Activated CD4-positive, alpha-beta T cell treated with anti-CD3 and anti-CD28 coated beads for 36 hours (primary cell): ENCODE measurements at regions of chr1 and their contacts with region 1.

Region 1: DNA sequence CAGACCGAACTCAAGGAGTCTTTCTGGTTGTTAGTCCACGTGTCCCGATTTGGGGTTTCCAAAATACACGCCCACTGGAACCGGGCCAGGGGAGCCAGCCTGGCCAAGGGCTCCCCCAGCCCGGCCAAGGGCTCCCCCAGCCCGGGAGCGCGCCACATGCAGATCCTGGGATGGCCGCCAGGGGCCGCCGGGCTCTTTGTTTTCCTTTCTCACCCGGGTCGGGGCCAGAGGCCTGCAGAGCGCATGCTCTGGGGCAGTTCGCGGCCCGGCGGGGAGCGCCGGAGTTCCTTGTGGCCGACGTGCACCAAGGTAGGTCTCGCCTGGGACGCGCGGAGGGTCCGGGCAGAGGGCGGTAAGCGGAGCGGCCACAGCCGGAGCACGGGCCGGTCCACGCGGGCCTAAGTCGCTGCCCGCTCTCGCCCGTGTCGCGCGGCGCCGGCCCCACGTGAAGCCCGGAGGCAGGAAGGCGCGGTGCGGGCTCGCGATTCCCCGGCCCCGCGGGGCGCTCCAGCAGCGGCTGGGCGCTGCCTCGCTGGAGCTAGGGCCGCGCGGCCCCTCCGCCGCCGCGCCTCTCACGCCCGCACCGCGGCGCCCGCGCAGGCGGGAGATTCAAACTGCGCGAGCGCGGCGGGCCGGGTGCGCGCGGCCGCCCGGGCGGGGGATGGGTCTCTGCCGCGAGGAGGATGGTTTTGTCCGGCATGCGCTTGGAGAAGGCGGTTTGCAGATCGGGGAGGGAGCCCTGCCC is 12.3 kb downstream of the RCC1 start:
- DNase-seq: peak; percentile 95
- ATAC-seq: peak; percentile 66
- H3K4me3 Mint-ChIP-seq: peak overlapping the region; percentile 77
- H3K27ac Mint-ChIP-seq: peak overlapping the region; percentile 83
- H3K4me1 Mint-ChIP-seq: peaks cover 34% of the 10 kb centered on the region
- H3K27me3 Mint-ChIP-seq: no peaks in the 10 kb centered on the region

Region 2: DNA sequence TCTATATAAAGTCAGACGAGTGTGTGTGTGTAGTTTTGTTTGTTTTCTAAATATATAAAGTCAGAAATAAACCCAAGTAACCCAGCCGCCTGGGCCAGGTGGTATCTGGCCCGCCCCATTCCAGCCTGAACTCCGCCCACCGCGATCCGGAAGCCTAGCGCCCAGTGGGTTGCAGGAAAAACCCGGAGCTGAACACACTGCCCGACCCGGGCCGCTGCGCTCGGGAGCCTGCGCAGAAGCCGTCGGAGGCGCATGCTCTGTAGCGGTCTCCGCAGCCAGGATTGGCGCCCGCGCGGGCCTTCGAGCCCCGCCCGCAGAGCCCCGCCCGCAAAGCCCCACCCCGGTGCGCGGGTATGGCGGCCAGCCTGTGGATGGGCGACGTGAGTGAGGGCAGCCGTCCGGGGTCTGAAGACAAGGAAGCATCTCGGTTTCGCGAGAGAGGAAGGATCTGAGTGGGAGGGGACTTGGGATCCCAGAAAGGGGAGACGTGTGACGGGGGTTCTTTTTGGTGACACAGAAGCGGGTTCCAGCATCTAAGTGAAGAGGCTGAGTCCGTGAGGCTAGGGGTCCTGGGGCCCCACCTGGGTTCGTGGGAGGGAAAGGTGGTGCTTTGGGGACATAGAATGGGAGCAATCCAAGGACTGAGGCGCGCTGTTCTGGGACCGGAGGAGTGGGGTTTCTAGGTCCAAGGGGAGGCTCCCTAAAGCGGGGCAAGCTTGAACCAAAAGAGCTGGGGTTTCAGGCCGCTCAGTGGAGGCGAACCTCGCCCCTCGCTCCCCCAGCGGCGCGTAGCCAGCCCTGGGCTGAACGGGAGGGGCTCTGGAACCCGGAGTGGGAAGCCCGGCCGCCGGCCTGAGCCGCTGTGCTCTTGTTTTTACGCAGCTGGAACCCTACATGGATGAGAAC is 34.8 kb after region 1 on chr1 and contains the start of gene TRNAU1AP:
- CTCF ChIA-PET with region 1: no interaction called
- POLR2A ChIA-PET with region 1: interaction called, 5 read pairs
- intact Hi-C with region 1: loop called (anchors 1 kb)
- DNase-seq: peak; percentile 99
- ATAC-seq: peak; percentile 94
- H3K4me3 Mint-ChIP-seq: peak within 1 kb of the TSS; percentile 92
- H3K27ac Mint-ChIP-seq: peak within 1 kb of the TSS; percentile 95
- H3K4me1 Mint-ChIP-seq: peaks cover 24% of the 10 kb centered on the region
- H3K27me3 Mint-ChIP-seq: no peaks in the 10 kb centered on the region
- total RNA-seq, gene TRNAU1AP: 50.7 to 60.2 TPM

Region 3: DNA sequence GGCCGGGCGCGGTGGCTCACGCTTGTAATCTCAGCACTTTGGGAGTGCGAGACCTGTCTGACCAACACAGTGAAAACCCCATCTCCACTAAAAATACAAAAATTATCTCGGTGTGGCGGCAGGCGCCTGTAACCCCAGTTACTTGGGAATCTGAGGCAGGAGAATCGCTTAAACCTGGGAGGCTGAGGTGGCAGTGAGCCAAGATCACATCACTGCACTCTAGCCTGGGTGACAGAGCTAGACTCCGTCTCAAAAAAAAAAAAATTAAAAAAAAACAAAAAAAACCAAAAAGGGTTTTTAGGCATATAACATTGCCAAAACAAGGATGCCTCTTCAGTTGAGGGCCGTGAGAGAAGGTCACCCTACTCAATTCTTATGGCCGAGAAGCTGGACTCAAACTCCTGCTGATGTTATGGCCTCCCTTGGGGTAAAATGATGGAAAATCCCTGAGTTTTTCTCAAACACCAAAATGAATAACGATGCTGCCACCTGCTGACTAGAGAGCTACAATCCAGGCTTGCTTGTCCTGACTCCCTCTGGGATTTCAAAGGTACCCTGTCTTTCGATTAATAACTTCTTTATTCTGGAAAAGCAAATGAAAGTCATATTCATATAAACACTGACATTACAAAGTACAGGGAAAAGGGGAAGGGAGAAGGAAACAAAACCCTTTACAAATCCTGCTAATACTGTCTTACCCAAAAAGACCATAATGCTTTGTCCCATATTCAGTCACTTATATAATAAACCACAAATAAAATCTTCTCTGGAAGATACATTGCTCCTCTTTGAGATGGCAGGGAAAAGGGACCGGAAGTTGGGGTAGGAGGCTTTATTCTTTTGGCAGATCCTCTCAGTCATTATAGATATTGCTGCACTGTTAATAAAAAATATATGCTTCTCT is 84.6 kb after region 1 on chr1:
- CTCF ChIA-PET with region 1: interaction called, 4 read pairs
- POLR2A ChIA-PET with region 1: no interaction called
- intact Hi-C with region 1: loop called (anchors 1 to 2 kb)
- DNase-seq: peak; percentile 60
- ATAC-seq: no peak
- H3K4me3 Mint-ChIP-seq: no peak overlapping the region
- H3K27ac Mint-ChIP-seq: no peak overlapping the region
- H3K4me1 Mint-ChIP-seq: peaks cover 13% of the 10 kb centered on the region
- H3K27me3 Mint-ChIP-seq: no peaks in the 10 kb centered on the region

Region 4: DNA sequence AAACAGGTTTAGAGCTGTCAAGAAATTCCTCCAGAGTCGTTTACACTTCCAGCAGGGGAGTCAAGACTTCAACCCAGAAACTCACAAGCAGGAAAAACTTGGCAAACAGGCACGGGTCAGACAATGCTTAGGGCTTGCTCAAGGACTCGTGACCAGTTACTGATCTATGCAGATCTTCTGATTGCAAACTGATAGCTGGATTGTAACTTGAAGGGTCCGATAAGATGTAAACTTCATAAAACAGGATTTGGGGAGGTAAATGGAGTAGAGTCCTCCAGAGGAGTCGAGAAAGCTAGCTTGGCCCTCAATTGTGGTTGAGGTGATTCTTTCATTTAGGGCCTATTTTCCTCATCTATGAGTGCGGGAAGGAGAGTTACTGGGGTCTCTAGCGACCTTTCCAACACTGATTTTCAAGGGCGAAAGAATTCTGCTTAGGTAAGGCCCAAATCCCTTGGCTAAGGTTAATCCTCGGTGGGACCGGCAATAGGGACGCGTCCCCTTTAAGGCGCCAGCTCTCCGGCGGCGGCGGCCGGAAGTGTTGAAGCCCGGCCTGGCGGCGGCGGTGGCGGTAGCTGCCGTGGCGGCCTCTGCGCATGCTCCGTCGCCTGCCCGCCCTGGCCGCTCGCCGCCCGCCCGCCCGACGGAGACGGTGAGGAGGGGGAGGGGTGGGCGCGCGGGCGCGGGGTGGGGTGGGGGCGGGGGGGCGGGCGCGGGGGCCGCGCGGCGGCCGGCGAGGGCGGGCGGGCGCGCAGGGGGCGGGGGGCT is 150.2 kb after region 1 on chr1 and contains the start of gene GMEB1:
- CTCF ChIA-PET with region 1: no interaction called
- POLR2A ChIA-PET with region 1: interaction called, 3 read pairs
- intact Hi-C with region 1: loop called in 1 of 2 experiments (anchors 1 kb)
- DNase-seq: peak; percentile 93
- ATAC-seq: peak; percentile 72
- H3K4me3 Mint-ChIP-seq: peak within 1 kb of the TSS; percentile 84
- H3K27ac Mint-ChIP-seq: peak within 1 kb of the TSS; percentile 99
- H3K4me1 Mint-ChIP-seq: peaks cover 11% of the 10 kb centered on the region
- H3K27me3 Mint-ChIP-seq: no peaks in the 10 kb centered on the region
- total RNA-seq, gene GMEB1: 20.3 to 25.4 TPM

Region 5: DNA sequence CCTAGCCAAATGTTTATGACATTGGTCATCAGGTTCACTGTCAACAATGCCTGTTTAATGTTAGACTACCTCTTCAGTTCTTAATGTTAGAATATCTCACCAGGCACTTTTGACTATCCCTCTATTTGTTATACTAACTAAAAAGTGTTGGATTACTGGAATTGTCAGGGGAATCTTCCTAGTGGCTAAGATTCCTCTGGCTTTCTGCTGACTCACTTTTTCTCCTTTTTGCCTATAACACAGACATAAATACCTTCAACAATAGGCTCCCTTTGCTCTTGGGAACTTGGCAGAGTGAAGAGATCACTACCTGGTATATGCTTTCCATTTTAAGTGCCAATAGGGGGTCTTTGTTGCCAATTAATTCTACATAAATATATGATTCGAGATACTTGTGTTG is 537.0 kb after region 1 on chr1:
- CTCF ChIA-PET with region 1: no interaction called
- POLR2A ChIA-PET with region 1: no interaction called
- intact Hi-C with region 1: no loop called
- DNase-seq: no peak
- ATAC-seq: no peak
- H3K4me3 Mint-ChIP-seq: no peak overlapping the region
- H3K27ac Mint-ChIP-seq: peak overlapping the region; percentile 13
- H3K4me1 Mint-ChIP-seq: peaks cover 16% of the 10 kb centered on the region
- H3K27me3 Mint-ChIP-seq: no peaks in the 10 kb centered on the region